BJ (cell line): ENCODE measurements at regions of chr2 and their contacts with region 1.

Region 1: GRCh38 chr2:231191896-231192872 is 6.2 kb upstream of the ARMC9 start:
- DNase-seq: no peak
- H3K4me3 ChIP-seq: no peak overlapping the region
- H3K27me3 ChIP-seq: no peaks in the 10 kb centered on the region
- CTCF ChIP-seq: peak; percentile 92

Region 2: DNA sequence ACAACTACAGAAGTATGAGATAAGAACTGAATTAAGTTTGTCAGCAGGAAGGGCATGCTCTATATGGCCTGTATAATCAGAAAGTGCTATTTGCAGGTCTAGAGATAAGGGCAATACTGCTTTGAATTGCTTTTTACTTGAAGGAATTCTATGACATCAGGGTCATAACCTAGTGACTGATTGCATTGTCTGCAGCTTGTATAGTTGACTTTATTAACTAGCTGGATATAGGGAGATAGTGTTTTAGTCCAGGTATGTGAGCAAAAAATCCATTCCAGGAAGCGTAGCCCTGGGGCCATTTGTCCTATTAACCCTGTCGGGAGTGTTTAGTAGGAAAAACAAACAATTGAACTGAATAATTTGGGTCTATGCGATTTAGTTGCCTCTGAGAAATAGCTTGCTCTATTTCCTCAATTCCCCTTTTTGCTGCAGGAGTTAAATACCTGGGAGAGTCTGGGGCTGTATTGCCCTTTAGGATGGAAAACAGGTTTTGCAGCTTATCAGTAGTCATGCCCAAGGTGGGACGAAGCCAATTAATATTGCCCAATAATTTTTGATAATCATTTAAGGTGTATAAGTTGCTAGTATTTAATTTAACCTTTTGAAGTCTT is 97.3 kb before region 1 on chr2:
- CTCF ChIA-PET with region 1: interaction called, 15 read pairs
- POLR2A ChIA-PET with region 1: no interaction called
- DNase-seq: no peak
- H3K4me3 ChIP-seq: no peak overlapping the region
- H3K27me3 ChIP-seq: no peaks in the 10 kb centered on the region
- CTCF ChIP-seq: no peak

Region 3: GRCh38 chr2:231104115-231104713 is 88.0 kb before region 1 on chr2:
- CTCF ChIA-PET with region 1: interaction called, 104 read pairs
- POLR2A ChIA-PET with region 1: no interaction called
- DNase-seq: peak; percentile 31
- H3K4me3 ChIP-seq: no peak overlapping the region
- H3K27me3 ChIP-seq: no peaks in the 10 kb centered on the region
- CTCF ChIP-seq: peak; percentile 84

Region 4: GRCh38 chr2:231110551-231110950 is 81.6 kb before region 1 on chr2:
- CTCF ChIA-PET with region 1: interaction called, 104 read pairs
- POLR2A ChIA-PET with region 1: interaction called, 3 read pairs
- DNase-seq: no peak
- H3K4me3 ChIP-seq: no peak overlapping the region
- H3K27me3 ChIP-seq: no peaks in the 10 kb centered on the region
- CTCF ChIP-seq: 0 out of 2 replicates have a peak, but pooled peaks have one; percentile 33

Region 5: DNA sequence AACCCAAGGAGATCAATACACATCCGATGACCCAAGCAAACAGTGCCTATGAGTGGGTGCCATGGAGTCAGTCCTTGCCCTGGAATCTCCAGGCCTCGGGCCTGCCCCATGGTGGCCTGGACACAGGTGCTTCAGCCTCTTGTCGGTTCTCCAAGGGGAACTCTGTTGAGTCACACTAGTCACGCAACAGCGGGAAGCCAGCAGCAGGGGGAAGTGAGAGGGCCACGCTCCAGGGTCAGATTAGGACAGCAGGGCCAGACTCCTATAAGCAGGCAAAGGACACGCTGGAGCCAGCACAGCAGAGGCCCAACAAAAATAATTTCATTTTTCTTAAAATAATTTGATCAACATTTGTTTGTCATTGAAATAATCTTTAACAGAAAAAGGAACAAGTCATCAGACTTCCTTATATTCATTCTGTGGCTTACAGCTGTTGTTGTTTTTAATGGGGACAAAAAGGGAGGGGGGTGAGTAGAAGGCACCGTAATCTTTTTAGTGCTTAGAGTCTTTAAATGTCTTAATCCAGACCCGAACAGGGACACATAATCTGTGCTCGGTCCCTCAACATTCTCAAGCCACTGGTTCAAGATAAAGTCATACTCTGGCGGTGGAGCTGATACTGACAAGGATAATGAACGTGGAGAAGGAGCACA is 10.2 kb before region 1 on chr2:
- CTCF ChIA-PET with region 1: interaction called, 10 read pairs
- POLR2A ChIA-PET with region 1: no interaction called
- DNase-seq: no peak
- H3K4me3 ChIP-seq: no peak overlapping the region
- H3K27me3 ChIP-seq: no peaks in the 10 kb centered on the region
- CTCF ChIP-seq: no peak